Activated CD8-positive, alpha-beta T cell treated with anti-CD3 and anti-CD28 coated beads for 36 hours (primary cell): ENCODE measurements at regions of chr14 and their contacts with region 1.

Region 1: GRCh38 chr14:72476657-72477499 is 417.0 kb downstream of the DPF3 start:
- DNase-seq: peak; percentile 93
- ATAC-seq: peak; percentile 89
- H3K4me3 Mint-ChIP-seq: peak overlapping the region; percentile 37
- H3K27ac Mint-ChIP-seq: peak overlapping the region; percentile 84
- H3K4me1 Mint-ChIP-seq: peaks cover 39% of the 10 kb centered on the region
- H3K27me3 Mint-ChIP-seq: peaks cover 19% of the 10 kb centered on the region
- CTCF ChIP-seq: no peak

Region 2: GRCh38 chr14:72303930-72304329 is 172.9 kb before region 1 on chr14:
- CTCF ChIA-PET with region 1: no interaction called
- POLR2A ChIA-PET with region 1: no interaction called
- intact Hi-C with region 1: no loop called
- DNase-seq: peak; percentile 4
- ATAC-seq: no peak
- H3K4me3 Mint-ChIP-seq: no peak overlapping the region
- H3K27ac Mint-ChIP-seq: no peak overlapping the region
- H3K4me1 Mint-ChIP-seq: no peaks in the 10 kb centered on the region
- H3K27me3 Mint-ChIP-seq: peaks cover 13% of the 10 kb centered on the region
- CTCF ChIP-seq: no peak

Region 3: DNA sequence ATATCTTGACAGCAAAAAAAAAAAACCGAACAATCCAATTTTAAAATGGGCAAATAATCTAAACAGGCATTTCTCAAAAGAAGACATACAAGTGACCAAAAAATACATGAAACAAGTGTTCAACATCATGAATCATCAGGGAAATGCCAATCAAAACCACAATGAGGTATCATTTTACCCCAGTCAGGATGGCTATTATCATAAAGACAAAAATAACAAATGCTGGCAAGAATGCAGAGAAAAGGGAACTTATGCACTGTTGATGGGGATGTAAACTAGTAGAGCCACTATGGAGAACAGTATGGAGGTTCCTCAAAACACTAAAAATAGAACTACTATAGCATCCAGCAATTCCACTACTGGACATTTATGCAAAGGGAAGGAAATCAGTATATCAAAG is 96.4 kb before region 1 on chr14:
- CTCF ChIA-PET with region 1: no interaction called
- POLR2A ChIA-PET with region 1: no interaction called
- intact Hi-C with region 1: no loop called
- DNase-seq: no peak
- ATAC-seq: no peak
- H3K4me3 Mint-ChIP-seq: no peak overlapping the region
- H3K27ac Mint-ChIP-seq: no peak overlapping the region
- H3K4me1 Mint-ChIP-seq: peaks cover 7% of the 10 kb centered on the region
- H3K27me3 Mint-ChIP-seq: peaks cover 20% of the 10 kb centered on the region
- CTCF ChIP-seq: no peak

Region 4: DNA sequence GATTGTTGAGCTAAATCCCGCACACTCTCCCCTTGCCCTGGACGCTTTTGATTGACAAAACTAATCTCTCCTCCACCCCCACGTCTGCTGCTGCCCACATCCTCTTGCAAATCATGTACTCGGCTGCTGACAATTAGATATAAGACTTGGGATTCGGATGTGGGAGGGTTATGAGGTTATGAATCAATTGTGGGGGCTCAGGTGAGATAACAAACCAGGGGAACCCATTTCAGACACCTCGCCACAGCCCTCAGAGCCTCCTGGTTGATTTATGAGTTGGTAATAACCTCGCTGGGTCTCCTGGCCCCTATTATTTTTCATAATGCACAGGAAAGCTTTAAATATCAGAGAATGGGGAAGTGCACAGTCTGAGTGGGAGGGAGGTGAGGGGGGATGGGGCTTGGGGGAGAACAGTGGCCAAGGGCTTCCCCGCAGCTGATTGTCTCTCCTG is 32.9 kb before region 1 on chr14:
- CTCF ChIA-PET with region 1: no interaction called
- POLR2A ChIA-PET with region 1: interaction called, 3 read pairs
- intact Hi-C with region 1: loop called (anchors 5 kb)
- DNase-seq: peak; percentile 86
- ATAC-seq: peak; percentile 82
- H3K4me3 Mint-ChIP-seq: no peak overlapping the region
- H3K27ac Mint-ChIP-seq: peak overlapping the region; percentile 49
- H3K4me1 Mint-ChIP-seq: peaks cover 41% of the 10 kb centered on the region
- H3K27me3 Mint-ChIP-seq: peaks cover 10% of the 10 kb centered on the region
- CTCF ChIP-seq: no peak